Activated CD4-positive, alpha-beta memory T cell treated with anti-CD3 and anti-CD28 coated beads for 36 hours (primary cell): ENCODE measurements at regions of chr19 and their contacts with region 1.

Region 1: GRCh38 chr19:46115396-46116106 is 8.9 kb downstream of the IGFL3 start:
- DNase-seq: peak; percentile 81
- H3K4me3 Mint-ChIP-seq: no peak overlapping the region
- H3K27ac Mint-ChIP-seq: no peak overlapping the region
- H3K4me1 Mint-ChIP-seq: peaks cover 11% of the 10 kb centered on the region
- H3K27me3 Mint-ChIP-seq: peaks cover 56% of the 10 kb centered on the region

Region 2: DNA sequence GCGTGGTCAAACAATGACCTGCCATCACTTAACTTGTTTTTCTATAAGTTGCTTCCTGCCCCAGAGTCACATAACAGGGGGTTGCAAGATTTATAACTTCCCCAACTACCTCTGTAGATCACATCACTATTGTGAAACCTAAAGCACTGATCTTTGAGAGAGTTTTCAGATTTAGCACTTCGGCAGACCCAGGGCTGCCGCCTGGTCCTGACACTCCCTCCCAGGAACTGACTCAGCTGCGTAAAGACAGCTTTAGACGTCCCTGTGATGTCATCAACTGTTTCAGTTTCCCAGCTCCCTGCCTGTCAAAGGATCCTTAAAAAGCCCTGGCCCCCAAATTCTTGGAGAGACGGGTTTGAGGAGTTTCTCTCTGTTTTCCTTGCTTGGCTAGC is 65.8 kb after region 1 on chr19:
- CTCF ChIA-PET with region 1: no interaction called
- POLR2A ChIA-PET with region 1: no interaction called
- intact Hi-C with region 1: loop called (anchors 2 kb)
- DNase-seq: peak; percentile 36
- H3K4me3 Mint-ChIP-seq: no peak overlapping the region
- H3K27ac Mint-ChIP-seq: no peak overlapping the region
- H3K4me1 Mint-ChIP-seq: peaks cover 20% of the 10 kb centered on the region
- H3K27me3 Mint-ChIP-seq: peaks cover 32% of the 10 kb centered on the region

Region 3: DNA sequence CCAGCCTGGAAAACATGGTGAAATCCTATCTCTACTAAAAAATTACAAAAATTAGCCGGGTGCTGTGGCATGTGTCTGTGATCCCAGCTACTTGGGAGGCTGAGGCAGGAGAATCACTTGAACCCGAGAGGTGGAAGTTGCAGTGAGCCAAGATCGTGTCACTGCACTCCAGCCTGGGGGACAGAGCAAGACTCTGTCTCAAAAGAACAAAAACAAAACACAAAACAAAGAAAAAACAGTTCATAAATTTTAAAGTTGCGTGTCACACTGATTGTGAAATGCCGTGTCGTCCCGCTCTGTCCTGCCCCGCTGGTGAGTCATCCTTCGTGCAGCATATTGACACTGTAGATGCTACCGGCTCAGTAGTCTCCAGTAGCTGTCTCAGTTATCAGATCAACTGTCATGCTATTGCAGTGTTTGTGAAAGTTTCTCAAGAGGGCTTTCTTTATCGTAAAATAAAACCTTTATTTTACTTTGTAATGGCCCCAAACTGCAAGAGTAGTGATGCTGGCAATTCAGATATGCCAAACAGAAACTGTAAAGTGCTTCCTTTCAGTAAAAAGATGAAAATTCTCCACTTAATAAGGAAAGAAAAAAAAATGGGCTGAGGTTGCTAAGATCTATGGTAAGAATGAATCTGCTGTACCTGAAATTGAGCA is 77.6 kb after region 1 on chr19:
- CTCF ChIA-PET with region 1: no interaction called
- POLR2A ChIA-PET with region 1: no interaction called
- intact Hi-C with region 1: no loop called
- DNase-seq: peak; percentile 47
- H3K4me3 Mint-ChIP-seq: no peak overlapping the region
- H3K27ac Mint-ChIP-seq: no peak overlapping the region
- H3K4me1 Mint-ChIP-seq: peaks cover 2% of the 10 kb centered on the region
- H3K27me3 Mint-ChIP-seq: peaks cover 57% of the 10 kb centered on the region